HEK293 (cell line): ENCODE measurements at regions of chr11 and their contacts with region 1.

Region 1: DNA sequence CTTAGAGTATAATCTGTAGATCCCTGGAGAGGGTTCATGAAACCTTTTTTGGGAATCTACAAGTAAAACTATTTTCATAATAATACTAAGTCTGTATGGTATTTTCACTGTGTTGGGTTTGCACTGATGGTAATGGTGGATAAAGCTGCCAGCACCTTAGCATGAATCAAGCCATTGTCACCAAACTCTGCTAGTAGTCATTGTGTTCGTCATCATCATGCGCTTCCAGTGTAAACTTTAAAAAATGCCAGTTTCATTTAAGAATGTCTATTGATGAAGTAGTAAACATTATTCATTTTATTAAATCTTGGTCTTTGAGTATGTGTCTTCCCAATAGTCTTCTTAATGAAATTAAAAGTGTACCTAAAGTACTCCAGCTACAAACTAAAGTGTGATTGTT is 15.0 kb downstream of the ALKBH3 start:
- H3K4me3 ChIP-seq: no peak overlapping the region
- H3K27ac ChIP-seq: no peak overlapping the region
- H3K4me1 ChIP-seq: no peaks in the 10 kb centered on the region
- CTCF ChIP-seq: no peak

Region 2: GRCh38 chr11:43837879-43838278 is 57.7 kb before region 1 on chr11:
- CTCF ChIA-PET with region 1: no interaction called
- POLR2A ChIA-PET with region 1: no interaction called
- H3K4me3 ChIP-seq: no peak overlapping the region
- H3K27ac ChIP-seq: no peak overlapping the region
- H3K4me1 ChIP-seq: peaks cover 6% of the 10 kb centered on the region
- CTCF ChIP-seq: no peak

Region 3: GRCh38 chr11:43880640-43881159 is 14.9 kb before region 1 on chr11 and contains the start of gene ALKBH3:
- CTCF ChIA-PET with region 1: interaction called, 18 read pairs
- POLR2A ChIA-PET with region 1: no interaction called
- H3K4me3 ChIP-seq: peak within 1 kb of the TSS; percentile 89
- H3K27ac ChIP-seq: no peak within 1 kb of the TSS
- H3K4me1 ChIP-seq: 0 out of 2 replicates have a peak, but pooled peaks cover 4% of the 10 kb centered on the region
- CTCF ChIP-seq: peak; percentile 37; the same call in 1 of the 2 replicates

Region 4: DNA sequence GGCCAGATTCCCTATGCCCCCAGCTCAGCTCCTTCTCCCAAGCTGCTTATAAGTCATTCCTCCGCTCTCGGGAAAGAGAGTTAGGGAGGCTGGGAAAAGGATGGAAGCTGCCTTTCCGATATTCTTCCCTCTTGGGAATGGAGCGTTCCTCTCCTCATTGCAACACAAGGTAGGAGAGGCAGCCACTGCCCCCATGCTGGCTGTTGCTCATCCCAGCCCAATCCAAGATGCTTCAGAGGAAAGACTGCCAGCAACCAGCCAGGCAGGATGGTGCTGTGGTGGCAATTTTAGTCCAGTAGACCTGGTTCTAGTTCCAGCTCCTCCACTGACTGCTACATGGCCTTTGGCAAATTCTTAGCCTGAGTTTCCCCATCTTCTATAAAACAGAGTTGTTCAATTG is 33.1 kb after region 1 on chr11:
- CTCF ChIA-PET with region 1: no interaction called
- POLR2A ChIA-PET with region 1: no interaction called
- H3K4me3 ChIP-seq: no peak overlapping the region
- H3K27ac ChIP-seq: no peak overlapping the region
- H3K4me1 ChIP-seq: no peaks in the 10 kb centered on the region
- CTCF ChIP-seq: no peak

Region 5: DNA sequence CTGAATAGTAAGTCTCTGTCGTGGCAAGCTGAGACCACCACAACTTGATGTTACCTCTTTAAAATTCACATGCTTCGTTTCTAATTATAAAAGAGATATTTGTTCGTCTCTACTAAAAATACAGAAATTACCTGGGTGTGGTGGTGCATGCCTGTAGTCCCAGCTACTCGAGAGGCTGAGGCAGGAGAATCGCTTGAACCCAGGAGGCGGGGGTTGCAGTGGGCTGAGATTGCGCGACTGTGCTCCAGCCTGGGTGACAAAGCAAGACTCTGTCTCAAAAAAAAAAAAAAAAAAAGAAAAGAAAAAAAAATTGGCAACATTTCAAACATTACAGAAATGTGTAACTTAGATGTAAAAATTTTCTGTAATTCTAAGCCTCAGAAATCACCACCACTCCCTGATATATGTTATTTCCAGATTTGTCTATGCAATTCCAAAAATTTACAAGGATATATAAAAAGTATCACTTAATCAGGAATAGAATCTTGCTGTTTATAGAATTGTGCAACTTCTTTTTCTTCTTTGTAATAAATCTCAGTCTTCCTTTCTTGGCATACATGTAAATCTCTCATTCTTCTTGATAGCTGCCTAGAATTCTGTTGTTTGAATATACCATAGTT is 84.1 kb after region 1 on chr11:
- CTCF ChIA-PET with region 1: no interaction called
- POLR2A ChIA-PET with region 1: no interaction called
- H3K4me3 ChIP-seq: no peak overlapping the region
- H3K27ac ChIP-seq: no peak overlapping the region
- H3K4me1 ChIP-seq: no peaks in the 10 kb centered on the region
- CTCF ChIP-seq: no peak

Region 6: GRCh38 chr11:44036811-44037657 is 141.4 kb after region 1 on chr11:
- CTCF ChIA-PET with region 1: interaction called, 62 read pairs
- POLR2A ChIA-PET with region 1: no interaction called
- H3K4me3 ChIP-seq: no peak overlapping the region
- H3K27ac ChIP-seq: no peak overlapping the region
- H3K4me1 ChIP-seq: no peaks in the 10 kb centered on the region
- CTCF ChIP-seq: peak; percentile 44; the same call in 1 of the 2 replicates

Region 7: DNA sequence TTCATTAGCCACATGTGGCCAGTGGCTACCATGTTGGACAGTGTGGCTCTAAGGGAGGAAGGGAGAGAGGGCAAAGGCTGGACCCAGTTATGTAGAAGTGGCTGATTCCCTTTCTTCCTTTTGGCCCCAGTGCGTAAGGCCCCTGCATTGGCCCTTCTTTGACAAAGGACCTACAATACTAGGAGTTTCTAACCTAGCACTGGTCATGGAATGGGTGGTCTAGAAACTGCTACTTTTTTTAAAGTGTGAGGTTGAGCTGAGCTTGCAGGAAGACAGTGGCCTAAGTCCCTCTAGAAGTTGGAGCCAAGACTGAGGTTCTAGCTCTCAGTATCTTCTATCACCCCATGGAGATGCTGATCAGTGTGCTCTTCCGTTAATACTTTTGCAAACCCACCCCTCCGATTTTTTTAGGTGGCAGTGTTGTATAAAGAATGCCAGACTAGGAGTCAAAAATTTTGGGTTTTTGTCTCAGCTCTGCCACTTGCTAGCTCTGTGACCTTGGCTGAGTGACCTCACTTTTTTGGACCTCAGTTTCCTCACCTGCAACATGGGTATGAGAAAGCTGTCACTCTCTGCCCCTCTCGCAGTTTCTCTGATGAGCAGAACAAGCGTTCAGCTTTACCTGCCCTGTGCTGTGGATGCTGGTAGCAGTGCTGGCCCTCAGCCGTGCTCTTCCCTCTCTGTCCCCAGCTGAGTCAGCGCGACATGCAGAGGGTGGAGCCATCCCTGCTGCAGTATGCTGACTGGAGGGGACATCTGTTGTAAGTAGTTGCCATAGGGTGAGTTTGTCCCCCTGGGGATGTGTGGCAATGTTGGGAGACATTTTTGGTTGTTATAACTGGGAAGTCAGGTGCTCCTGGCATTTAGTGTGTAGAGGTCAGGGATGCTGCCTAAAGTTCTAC is 177.4 kb after region 1 on chr11:
- CTCF ChIA-PET with region 1: no interaction called
- POLR2A ChIA-PET with region 1: no interaction called
- H3K4me3 ChIP-seq: no peak overlapping the region
- H3K27ac ChIP-seq: no peak overlapping the region
- H3K4me1 ChIP-seq: no peaks in the 10 kb centered on the region
- CTCF ChIP-seq: no peak